ENCODE measurements at regions of chr17 and their contacts with region 1.

Region 1: GRCh38 chr17:48816774-48817590 is at the start of gene TTLL6:
- DNase-seq: no peak
- H3K4me3 ChIP-seq: peak within 1 kb of the TSS; percentile 45 to 55
- H3K27ac ChIP-seq: peak within 1 kb of the TSS; percentile 47
- H3K4me1 ChIP-seq: peaks cover 12% of the 10 kb centered on the region
- H3K27me3 ChIP-seq: no peaks in the 10 kb centered on the region
- CTCF ChIP-seq: no peak
- POLR2A ChIP-seq: no peak
- total RNA-seq, gene TTLL6: 0.49 TPM

Region 2: DNA sequence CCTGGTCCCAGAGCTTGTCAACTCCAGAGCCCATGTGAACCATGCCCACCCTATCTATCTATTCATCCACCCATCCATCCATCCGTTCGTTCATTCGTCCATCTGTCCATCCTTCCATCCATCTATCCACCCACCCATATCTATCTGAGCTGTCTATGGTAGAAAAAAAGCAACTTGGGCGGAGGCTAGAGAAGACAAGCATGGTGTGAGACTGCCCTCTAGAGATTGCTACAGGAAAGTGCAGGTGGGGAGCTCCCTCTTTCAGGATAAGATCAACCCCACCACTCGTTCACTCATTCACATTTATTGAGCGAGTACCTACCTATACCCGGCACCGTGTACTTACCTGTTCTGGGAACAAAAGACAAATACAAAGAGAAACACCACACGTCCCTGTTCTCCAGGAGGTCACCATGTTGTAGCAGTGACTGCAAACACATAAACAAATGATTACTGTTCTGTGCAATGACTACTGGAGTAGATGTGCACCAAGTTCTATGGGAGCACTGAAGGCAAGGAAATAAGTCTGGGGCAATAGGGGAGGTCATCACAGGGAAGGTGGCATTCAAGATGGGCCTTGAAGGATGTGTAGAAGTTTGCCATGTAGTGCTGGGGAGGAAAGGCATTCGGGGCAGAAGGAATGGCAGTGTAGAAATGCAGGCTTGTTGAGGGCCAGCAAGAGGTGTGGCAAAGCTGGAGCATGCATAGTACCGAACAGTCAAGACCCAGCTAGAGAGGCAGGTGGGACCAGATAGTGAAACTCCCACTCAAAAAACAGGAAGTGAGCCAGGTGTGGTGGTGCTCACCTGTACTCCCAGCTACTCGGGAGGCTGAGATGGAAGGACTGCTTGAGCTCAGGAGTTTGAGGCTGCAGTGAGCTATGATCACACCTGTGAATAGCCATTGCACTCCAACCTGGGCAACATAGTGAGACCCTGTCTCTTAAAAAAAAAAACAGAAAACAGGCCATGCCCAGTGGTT is 62.2 kb after region 1 on chr17:
- intact Hi-C with region 1: loop called (anchors 5 kb)
- DNase-seq: no peak
- H3K4me3 ChIP-seq: no peak overlapping the region
- H3K27ac ChIP-seq: no peak overlapping the region
- H3K4me1 ChIP-seq: no peaks in the 10 kb centered on the region
- H3K27me3 ChIP-seq: no peaks in the 10 kb centered on the region
- CTCF ChIP-seq: peak; percentile 73 to 94 (median 82)
- POLR2A ChIP-seq: no peak